ENCODE measurements at regions of chr16 and their contacts with region 1.

Region 1: DNA sequence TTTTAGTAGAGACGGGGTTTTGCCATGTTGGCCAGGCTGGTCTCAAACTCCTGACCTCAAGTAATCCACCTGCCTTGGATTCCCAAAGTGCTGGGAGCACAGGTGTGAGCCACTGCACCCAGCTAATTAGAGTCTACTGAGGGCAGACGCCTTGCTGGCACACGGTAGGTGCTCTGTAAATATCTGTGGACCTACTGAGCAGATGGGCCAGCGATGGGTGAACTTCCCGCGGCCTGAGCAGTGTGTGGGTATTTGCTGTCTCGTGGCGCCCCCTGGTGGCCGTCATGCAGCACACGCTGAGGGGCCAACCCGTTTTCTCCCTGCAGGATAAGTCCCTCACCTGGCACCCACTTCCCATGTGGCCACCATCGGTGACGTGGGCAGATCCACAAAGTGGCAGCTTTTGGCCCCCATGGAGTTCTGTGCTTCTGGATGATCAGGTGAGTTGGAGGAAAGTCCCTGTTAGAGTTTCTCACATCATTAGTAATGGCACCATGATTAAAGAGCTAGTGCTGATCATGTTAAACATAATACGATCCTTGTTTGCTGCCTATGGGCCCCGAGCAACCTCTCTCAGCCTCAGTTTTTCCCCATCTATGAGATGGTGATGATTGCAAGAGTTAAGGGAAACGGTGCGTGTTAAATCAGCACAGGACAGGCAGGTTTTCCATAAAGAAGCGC is 40.7 kb downstream of the ZDHHC7 start:
- DNase-seq: peak; percentile 52
- H3K4me3 ChIP-seq: no peak overlapping the region
- H3K27ac ChIP-seq: no peak overlapping the region
- H3K4me1 ChIP-seq: no peaks in the 10 kb centered on the region
- H3K27me3 ChIP-seq: no peaks in the 10 kb centered on the region
- CTCF ChIP-seq: peak; percentile 78 to 92

Region 2: GRCh38 chr16:84239141-84239769 is 731.3 kb before region 1 on chr16:
- CTCF ChIA-PET with region 1: no interaction called
- dilution Hi-C with region 1: loop called (anchors 10 kb)
- in situ Hi-C with region 1: no loop called
- intact Hi-C with region 1: no loop called
- DNase-seq: no peak
- H3K4me3 ChIP-seq: no peak overlapping the region
- H3K27ac ChIP-seq: no peak overlapping the region
- H3K4me1 ChIP-seq: no peaks in the 10 kb centered on the region
- H3K27me3 ChIP-seq: peaks cover 9% of the 10 kb centered on the region
- CTCF ChIP-seq: no peak

Region 3: GRCh38 chr16:84511180-84511824 is 459.3 kb before region 1 on chr16:
- CTCF ChIA-PET with region 1: no interaction called
- dilution Hi-C with region 1: loop called (anchors 10 kb)
- in situ Hi-C with region 1: loop called (anchors 10 to 25 kb)
- intact Hi-C with region 1: loop called (anchors 1 kb)
- DNase-seq: peak; percentile 72
- H3K4me3 ChIP-seq: no peak overlapping the region
- H3K27ac ChIP-seq: no peak overlapping the region
- H3K4me1 ChIP-seq: peaks cover 4% of the 10 kb centered on the region
- H3K27me3 ChIP-seq: no peaks in the 10 kb centered on the region
- CTCF ChIP-seq: peak; percentile 90 to 94

Region 4: GRCh38 chr16:84738255-84739038 is 232.1 kb before region 1 on chr16:
- CTCF ChIA-PET with region 1: no interaction called
- dilution Hi-C with region 1: no loop called
- in situ Hi-C with region 1: no loop called
- intact Hi-C with region 1: loop called (anchors 1 kb)
- DNase-seq: peak; percentile 72
- H3K4me3 ChIP-seq: no peak overlapping the region
- H3K27ac ChIP-seq: no peak overlapping the region
- H3K4me1 ChIP-seq: peaks cover 40% of the 10 kb centered on the region
- H3K27me3 ChIP-seq: no peaks in the 10 kb centered on the region
- CTCF ChIP-seq: peak; percentile 87 to 94

Region 5: DNA sequence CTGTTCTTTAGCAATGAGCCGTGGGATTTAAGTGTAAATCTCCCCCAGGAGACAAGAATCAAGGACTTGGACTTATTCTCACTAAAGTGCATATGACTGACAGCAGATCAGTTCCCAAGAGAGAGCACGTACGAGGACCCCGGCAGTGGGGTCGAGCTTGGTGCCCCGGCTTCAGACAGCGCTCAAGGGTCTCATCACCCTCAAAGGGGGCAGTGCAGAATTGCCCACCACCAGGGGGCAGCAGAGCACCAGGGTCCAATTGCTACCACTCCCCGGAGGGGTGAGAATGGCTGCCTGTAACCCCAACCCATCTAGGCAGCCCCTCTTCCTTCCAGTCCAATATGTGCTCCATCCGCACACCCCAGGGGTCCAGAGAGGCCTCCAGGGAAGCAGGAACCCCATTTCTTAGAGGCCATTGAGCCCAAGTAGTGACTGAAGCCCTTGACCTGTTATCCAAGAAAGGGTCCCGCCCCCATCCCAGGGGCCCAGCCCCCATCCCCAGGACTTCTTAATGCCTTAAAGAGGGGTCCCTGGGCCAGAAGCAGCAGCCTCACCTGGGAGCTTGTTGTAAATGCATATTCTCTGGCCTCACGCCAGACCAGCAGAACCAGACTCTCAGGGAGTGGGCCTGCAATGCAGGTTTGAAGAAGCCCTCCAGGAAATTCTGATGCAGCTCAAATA is 45.4 kb before region 1 on chr16:
- CTCF ChIA-PET with region 1: no interaction called
- dilution Hi-C with region 1: loop called (anchors 10 kb)
- in situ Hi-C with region 1: no loop called
- intact Hi-C with region 1: loop called (anchors 1 kb)
- DNase-seq: no peak
- H3K4me3 ChIP-seq: no peak overlapping the region
- H3K27ac ChIP-seq: no peak overlapping the region
- H3K4me1 ChIP-seq: no peaks in the 10 kb centered on the region
- H3K27me3 ChIP-seq: no peaks in the 10 kb centered on the region
- CTCF ChIP-seq: peak; percentile 81 to 92

Region 6: GRCh38 chr16:85010931-85011845 is 40.6 kb after region 1 on chr16 and contains the start of gene ZDHHC7:
- CTCF ChIA-PET with region 1: no interaction called
- dilution Hi-C with region 1: loop called (anchors 5 kb)
- in situ Hi-C with region 1: no loop called
- intact Hi-C with region 1: no loop called
- DNase-seq: peak; percentile 77
- H3K4me3 ChIP-seq: peak within 1 kb of the TSS; percentile 68 to 96 (median 78)
- H3K27ac ChIP-seq: peak within 1 kb of the TSS; percentile 80
- H3K4me1 ChIP-seq: peaks cover 14% of the 10 kb centered on the region
- H3K27me3 ChIP-seq: no peaks in the 10 kb centered on the region
- CTCF ChIP-seq: no peak
- total RNA-seq, gene ZDHHC7: 46.9 to 83.4 TPM

Measured in mammary epithelial cell (primary cell).